ENCODE measurements at regions of chr15 and their contacts with region 1.

Region 1: DNA sequence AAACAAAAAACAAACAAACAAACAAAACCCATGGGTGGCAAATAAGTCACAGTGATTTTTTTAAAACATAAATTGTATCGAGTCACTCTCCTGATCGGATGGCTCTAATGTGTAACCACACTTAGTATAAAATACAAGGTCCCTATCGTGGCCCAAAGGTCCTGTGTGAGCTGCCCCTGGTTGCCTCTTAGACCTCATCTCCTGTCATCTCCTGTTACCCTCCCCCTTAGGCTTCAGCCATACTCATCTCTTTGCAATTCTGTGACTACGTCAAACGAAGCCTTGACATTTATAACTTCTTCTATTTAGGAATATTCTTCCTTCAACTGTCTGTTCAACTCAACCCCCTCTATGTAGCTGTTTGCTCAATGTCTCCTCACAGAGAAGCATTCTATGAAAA is 43.9 kb upstream of the TTBK2 start:
- DNase-seq: no peak
- ATAC-seq: no peak
- H3K4me3 ChIP-seq: no peak overlapping the region
- H3K4me3 Mint-ChIP-seq: no peak overlapping the region
- H3K27ac ChIP-seq: no peak overlapping the region
- H3K27ac Mint-ChIP-seq: no peak overlapping the region
- H3K4me1 ChIP-seq: no peaks in the 10 kb centered on the region
- H3K4me1 Mint-ChIP-seq: no peaks in the 10 kb centered on the region
- H3K27me3 ChIP-seq: no peaks in the 10 kb centered on the region
- H3K27me3 Mint-ChIP-seq: no peaks in the 10 kb centered on the region
- CTCF ChIP-seq: no peak

Region 2: DNA sequence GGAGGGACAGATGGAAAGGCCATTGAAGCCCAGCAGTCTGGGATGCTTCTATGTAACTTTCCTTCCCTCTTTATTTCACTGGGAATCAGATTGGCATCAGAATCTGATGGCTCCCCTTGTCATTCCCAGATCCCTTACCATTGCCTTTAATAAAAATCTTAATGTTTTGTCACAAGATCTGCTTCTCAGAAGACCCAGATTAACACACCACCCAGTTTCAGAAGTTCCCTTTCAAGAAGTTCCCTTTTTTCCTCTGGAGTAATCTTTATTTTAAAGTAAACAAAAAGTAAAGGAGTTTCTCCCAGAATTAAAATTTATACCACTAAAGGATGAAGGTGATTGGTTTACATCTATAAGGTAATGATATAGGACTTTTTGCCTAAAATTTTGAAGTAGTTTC is 65.0 kb after region 1 on chr15:
- CTCF ChIA-PET with region 1: no interaction called
- POLR2A ChIA-PET with region 1: no interaction called
- intact Hi-C with region 1: loop called in 1 of 2 experiments (anchors 10 kb)
- DNase-seq: no peak
- ATAC-seq: no peak
- H3K4me3 ChIP-seq: no peak overlapping the region
- H3K4me3 Mint-ChIP-seq: no peak overlapping the region
- H3K27ac ChIP-seq: no peak overlapping the region
- H3K27ac Mint-ChIP-seq: no peak overlapping the region
- H3K4me1 ChIP-seq: no peaks in the 10 kb centered on the region
- H3K4me1 Mint-ChIP-seq: no peaks in the 10 kb centered on the region
- H3K27me3 ChIP-seq: no peaks in the 10 kb centered on the region
- H3K27me3 Mint-ChIP-seq: no peaks in the 10 kb centered on the region
- CTCF ChIP-seq: no peak

Region 3: GRCh38 chr15:43086551-43086950 is 122.1 kb after region 1 on chr15:
- CTCF ChIA-PET with region 1: no interaction called
- POLR2A ChIA-PET with region 1: no interaction called
- intact Hi-C with region 1: no loop called
- DNase-seq: no peak
- ATAC-seq: no peak
- H3K4me3 ChIP-seq: no peak overlapping the region
- H3K4me3 Mint-ChIP-seq: no peak overlapping the region
- H3K27ac ChIP-seq: no peak overlapping the region
- H3K27ac Mint-ChIP-seq: no peak overlapping the region
- H3K4me1 ChIP-seq: no peaks in the 10 kb centered on the region
- H3K4me1 Mint-ChIP-seq: peaks cover 36% of the 10 kb centered on the region
- H3K27me3 ChIP-seq: no peaks in the 10 kb centered on the region
- H3K27me3 Mint-ChIP-seq: no peaks in the 10 kb centered on the region
- CTCF ChIP-seq: no peak